Heart left ventricle (tissue), 16 donors: ENCODE measurements at regions of chr7 and their contacts with region 1.

Region 1: DNA sequence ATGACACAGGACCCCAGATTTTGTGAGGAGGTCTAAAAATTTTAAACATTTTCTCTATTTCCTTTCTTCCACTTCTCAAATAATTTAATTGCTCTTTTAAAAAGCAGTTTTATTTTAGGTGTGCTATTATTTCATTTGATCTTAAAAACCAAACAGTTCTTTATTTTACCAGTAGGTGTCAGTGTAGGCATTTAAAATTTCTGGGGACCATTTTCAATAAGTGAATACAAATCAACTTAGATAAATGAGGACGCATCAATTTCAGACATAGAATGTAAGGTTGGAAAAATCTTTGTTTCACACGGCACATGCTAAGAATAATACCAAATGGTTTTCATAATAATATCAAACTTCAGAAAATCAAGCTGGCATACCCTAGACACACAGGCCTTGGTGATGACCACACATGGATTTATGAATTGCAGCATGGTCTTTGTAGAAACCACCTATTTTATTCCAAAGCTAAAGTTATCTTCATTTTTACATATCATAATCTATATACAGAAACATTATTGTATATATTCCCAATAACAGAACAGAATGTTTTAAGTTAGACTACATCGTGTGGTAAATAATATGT is 127.6 kb upstream of the SLC26A5 start:
- DNase-seq: no peak
- ATAC-seq: no peak
- H3K4me3 ChIP-seq: no peak overlapping the region
- H3K27ac ChIP-seq: no peak overlapping the region
- H3K4me1 ChIP-seq: peaks cover 0 to 7% (median 0%) of the 10 kb centered on the region in 12 donors
- H3K27me3 ChIP-seq: peaks cover 0 to 5% (median 0%) of the 10 kb centered on the region in 9 donors
- CTCF ChIP-seq: peak; percentile 53 to 73 (median 62)
- POLR2A ChIP-seq: no peak

Region 2: GRCh38 chr7:103065667-103066066 is 507.9 kb before region 1 on chr7:
- intact Hi-C with region 1: no loop called
- DNase-seq: peak in 2 of 5 donors; percentile 30 to 56
- ATAC-seq: peak in 1 of 4 donors; percentile 53
- H3K4me3 ChIP-seq: no peak overlapping the region
- H3K27ac ChIP-seq: no peak overlapping the region
- H3K4me1 ChIP-seq: no peaks in the 10 kb centered on the region
- H3K27me3 ChIP-seq: no peaks in the 10 kb centered on the region
- CTCF ChIP-seq: peak in 9 of 12 donors; percentile 26 to 49 (median 36)
- POLR2A ChIP-seq: no peak

Region 3: DNA sequence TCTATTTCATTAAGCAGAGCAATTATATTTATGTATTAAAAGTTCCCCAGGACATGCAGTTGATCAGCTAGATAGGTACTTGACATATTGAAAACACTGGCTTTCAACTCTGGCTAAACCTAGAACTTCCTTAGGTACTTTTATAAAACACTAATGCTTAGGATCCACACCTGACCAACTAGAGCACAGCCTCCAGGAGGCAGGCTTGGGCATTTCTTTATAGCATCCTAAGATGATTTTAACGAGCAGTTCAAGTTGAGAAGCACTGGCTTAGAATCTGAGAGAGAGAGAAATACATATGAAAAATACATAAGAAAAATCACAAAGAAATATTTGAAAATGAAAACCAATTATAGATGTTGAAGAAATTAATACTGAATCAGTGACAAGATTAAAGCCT is 148.4 kb before region 1 on chr7:
- intact Hi-C with region 1: no loop called
- DNase-seq: no peak
- ATAC-seq: no peak
- H3K4me3 ChIP-seq: no peak overlapping the region
- H3K27ac ChIP-seq: no peak overlapping the region
- H3K4me1 ChIP-seq: no peaks in the 10 kb centered on the region
- H3K27me3 ChIP-seq: peaks cover 0 to 13% (median 0%) of the 10 kb centered on the region in 9 donors
- CTCF ChIP-seq: no peak
- POLR2A ChIP-seq: no peak

Region 4: GRCh38 chr7:104900525-104901239 is 1327.1 kb after region 1 on chr7:
- intact Hi-C with region 1: loop called in 1 of 10 experiments (anchors 10 kb)
- DNase-seq: no peak
- ATAC-seq: peak in 1 of 4 donors; percentile 27
- H3K4me3 ChIP-seq: no peak overlapping the region
- H3K27ac ChIP-seq: no peak overlapping the region
- H3K4me1 ChIP-seq: peaks cover 0 to 3% (median 0%) of the 10 kb centered on the region in 12 donors
- H3K27me3 ChIP-seq: no peaks in the 10 kb centered on the region
- CTCF ChIP-seq: no peak
- POLR2A ChIP-seq: no peak